ENCODE measurements at regions of chr3 and their contacts with region 1.

Region 1: GRCh38 chr3:129026728-129027543 is 25.8 kb downstream of the EFCC1 start:
- DNase-seq: peak; percentile 92
- H3K4me3 Mint-ChIP-seq: peak overlapping the region; percentile 72
- H3K27ac Mint-ChIP-seq: peak overlapping the region; percentile 76
- H3K4me1 Mint-ChIP-seq: peaks cover 13% of the 10 kb centered on the region
- H3K27me3 Mint-ChIP-seq: no peaks in the 10 kb centered on the region

Region 2: GRCh38 chr3:129016356-129016719 is 10.6 kb before region 1 on chr3:
- intact Hi-C with region 1: loop called (anchors 1 kb)
- DNase-seq: no peak
- H3K4me3 Mint-ChIP-seq: peak overlapping the region; percentile 34
- H3K27ac Mint-ChIP-seq: peak overlapping the region; percentile 95
- H3K4me1 Mint-ChIP-seq: peaks cover 26% of the 10 kb centered on the region
- H3K27me3 Mint-ChIP-seq: no peaks in the 10 kb centered on the region

Region 3: GRCh38 chr3:129045675-129046036 is 18.7 kb after region 1 on chr3:
- intact Hi-C with region 1: loop called (anchors 1 kb)
- DNase-seq: peak; percentile 40
- H3K4me3 Mint-ChIP-seq: no peak overlapping the region
- H3K27ac Mint-ChIP-seq: no peak overlapping the region
- H3K4me1 Mint-ChIP-seq: no peaks in the 10 kb centered on the region
- H3K27me3 Mint-ChIP-seq: peaks cover 40% of the 10 kb centered on the region

Region 4: DNA sequence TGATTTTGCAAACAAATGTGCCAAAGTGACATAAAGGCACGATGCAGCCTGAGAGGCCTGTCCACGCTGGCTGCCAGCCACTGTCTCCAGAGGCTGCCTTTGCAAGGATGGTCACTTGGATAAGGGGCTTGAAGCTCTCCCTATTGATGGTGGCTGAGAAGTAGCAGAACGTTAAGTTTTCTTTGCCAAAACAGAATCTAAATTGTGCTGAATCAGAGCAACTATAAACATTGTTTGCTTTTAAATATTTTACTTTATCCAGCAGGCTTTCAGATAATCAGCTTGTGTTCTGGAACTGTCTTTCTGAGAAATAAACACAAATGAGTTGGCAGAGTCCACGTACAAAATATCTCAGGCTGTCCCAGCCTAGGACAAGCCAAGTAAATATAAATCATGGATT is 180.5 kb after region 1 on chr3:
- intact Hi-C with region 1: no loop called
- DNase-seq: no peak
- H3K4me3 Mint-ChIP-seq: no peak overlapping the region
- H3K27ac Mint-ChIP-seq: no peak overlapping the region
- H3K4me1 Mint-ChIP-seq: no peaks in the 10 kb centered on the region
- H3K27me3 Mint-ChIP-seq: peaks cover 3% of the 10 kb centered on the region

Measured in activated T-helper 2 cell treated with anti-CD3 and anti-CD28 coated beads, Interferon-gamma antibody, Interleukin-2, Interleukin-4, amounts not matched to agents 10 μg/mL and 5 μg/mL and 100 μg/mL, durations not matched to agents 14 hours and 24 hours and 36 hours (primary cell).